SK-N-SH (cell line): ENCODE measurements at regions of chr2 and their contacts with region 1.

Region 1: DNA sequence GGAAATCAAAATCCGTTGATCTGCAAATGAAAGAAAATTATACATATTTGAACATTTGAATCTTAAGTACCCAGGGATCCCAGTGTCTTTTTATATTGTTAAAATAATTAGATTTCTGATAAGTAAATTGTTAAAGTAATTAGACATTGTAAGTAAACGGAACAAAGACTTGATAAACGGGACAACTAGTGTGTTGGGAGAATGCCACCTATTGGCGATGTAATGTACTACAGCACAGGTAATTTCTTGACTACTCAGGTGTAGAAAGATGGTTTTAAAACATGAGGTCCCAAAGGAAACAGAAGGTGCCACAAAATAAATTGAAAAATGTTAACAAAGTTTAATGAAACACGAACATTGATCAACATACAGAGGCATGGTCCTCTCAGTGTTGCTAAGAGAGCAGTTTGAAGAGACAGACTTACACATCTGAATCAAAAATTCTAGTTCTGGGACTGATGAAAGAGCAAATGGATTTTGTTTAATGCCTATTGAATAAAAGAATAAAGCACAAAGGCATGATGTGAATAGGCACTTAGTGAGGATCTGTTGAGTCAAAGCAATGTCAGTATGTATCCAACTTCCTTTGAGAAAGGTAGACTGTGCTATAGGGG is 103.4 kb upstream of the RASGRP3 start:
- DNase-seq: peak; percentile 49
- H3K4me3 ChIP-seq: no peak overlapping the region
- H3K27ac ChIP-seq: peak overlapping the region in 1 of 2 experiments; percentile 35; a peak in 1 of 4 replicates
- H3K4me1 ChIP-seq: no peaks in the 10 kb centered on the region
- H3K27me3 ChIP-seq: no peaks in the 10 kb centered on the region
- CTCF ChIP-seq: peak; percentile 94
- EP300 ChIP-seq: no peak
- RAD21 ChIP-seq: peak; percentile 83

Region 2: GRCh38 chr2:33354981-33355380 is 18.1 kb before region 1 on chr2:
- CTCF ChIA-PET with region 1: interaction called, 11 read pairs
- POLR2A ChIA-PET with region 1: no interaction called
- DNase-seq: no peak
- H3K4me3 ChIP-seq: no peak overlapping the region
- H3K27ac ChIP-seq: peak overlapping the region in 1 of 2 experiments; percentile 69; a peak in 2 of 4 replicates
- H3K4me1 ChIP-seq: no peaks in the 10 kb centered on the region
- H3K27me3 ChIP-seq: no peaks in the 10 kb centered on the region
- CTCF ChIP-seq: no peak
- EP300 ChIP-seq: no peak
- RAD21 ChIP-seq: no peak

Region 3: DNA sequence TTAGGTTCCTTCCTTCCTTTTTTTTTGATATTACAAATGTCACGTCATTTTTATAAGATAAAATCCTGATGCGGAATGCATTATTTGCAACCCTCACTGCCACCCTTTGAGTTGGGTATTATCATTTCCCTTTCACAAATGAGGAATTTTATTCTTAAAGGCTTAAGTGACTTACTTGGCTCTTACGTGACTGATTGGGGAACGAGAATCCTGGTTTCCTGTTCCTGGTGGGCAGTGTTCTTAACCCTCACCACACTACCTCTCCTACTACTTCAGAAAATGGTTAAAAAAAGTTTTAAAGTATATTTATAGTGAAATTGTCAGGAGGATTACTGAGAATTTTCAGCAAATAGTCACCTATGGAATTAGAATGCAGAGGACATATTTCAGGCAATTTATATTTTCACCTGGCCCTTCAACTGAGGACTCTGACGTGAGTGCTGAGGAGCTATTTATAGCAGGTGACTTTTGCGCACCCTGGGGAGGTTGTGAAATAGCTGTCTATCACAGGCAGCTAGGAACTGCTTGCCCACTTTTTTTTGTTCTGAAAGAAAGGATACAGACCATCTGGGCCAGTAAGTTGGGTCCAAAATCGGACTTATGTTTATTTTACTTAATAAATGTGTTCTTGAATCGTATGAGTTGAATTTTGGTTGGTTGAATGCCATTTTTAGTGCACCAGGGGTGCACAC is 84.7 kb after region 1 on chr2:
- CTCF ChIA-PET with region 1: no interaction called
- POLR2A ChIA-PET with region 1: no interaction called
- DNase-seq: no peak
- H3K4me3 ChIP-seq: no peak overlapping the region
- H3K27ac ChIP-seq: no peak overlapping the region
- H3K4me1 ChIP-seq: no peaks in the 10 kb centered on the region
- H3K27me3 ChIP-seq: no peaks in the 10 kb centered on the region
- CTCF ChIP-seq: no peak
- EP300 ChIP-seq: no peak
- RAD21 ChIP-seq: no peak